CD8-positive, alpha-beta T cell (primary cell): ENCODE measurements at regions of chr15 and their contacts with region 1.

Region 1: GRCh38 chr15:42920519-42921227 is at the start of gene TTBK2:
- DNase-seq: peak; percentile 94 to 99 (median 97)
- ATAC-seq: peak; percentile 94
- H3K4me3 ChIP-seq: peak within 1 kb of the TSS; percentile 69 to 70
- H3K4me3 Mint-ChIP-seq: peak within 1 kb of the TSS; percentile 98
- H3K27ac ChIP-seq: peak within 1 kb of the TSS; percentile 39 to 64
- H3K27ac Mint-ChIP-seq: peak within 1 kb of the TSS; percentile 96
- H3K4me1 ChIP-seq: peaks cover 9% of the 10 kb centered on the region
- H3K4me1 Mint-ChIP-seq: peaks cover 31% of the 10 kb centered on the region
- H3K27me3 ChIP-seq: no peaks in the 10 kb centered on the region
- H3K27me3 Mint-ChIP-seq: no peaks in the 10 kb centered on the region
- CTCF ChIP-seq: no peak
- total RNA-seq, gene TTBK2: 17.7 to 19.3 TPM

Region 2: GRCh38 chr15:40941528-40942336 is 1978.9 kb before region 1 on chr15:
- CTCF ChIA-PET with region 1: no interaction called
- POLR2A ChIA-PET with region 1: no interaction called
- intact Hi-C with region 1: no loop called
- DNase-seq: peak in 8 of 9 experiments; percentile 56 to 84 (median 66)
- ATAC-seq: peak; percentile 72
- H3K4me3 ChIP-seq: peak overlapping the region; percentile 69 to 78
- H3K4me3 Mint-ChIP-seq: peak overlapping the region; percentile 86
- H3K27ac ChIP-seq: peak overlapping the region; percentile 30 to 64
- H3K27ac Mint-ChIP-seq: peak overlapping the region; percentile 30
- H3K4me1 ChIP-seq: peaks cover 29% of the 10 kb centered on the region
- H3K4me1 Mint-ChIP-seq: peaks cover 37% of the 10 kb centered on the region
- H3K27me3 ChIP-seq: no peaks in the 10 kb centered on the region
- H3K27me3 Mint-ChIP-seq: no peaks in the 10 kb centered on the region
- CTCF ChIP-seq: peak; percentile 40

Region 3: GRCh38 chr15:41331833-41332787 is 1588.6 kb before region 1 on chr15 and contains the start of gene OIP5:
- CTCF ChIA-PET with region 1: no interaction called
- POLR2A ChIA-PET with region 1: no interaction called
- intact Hi-C with region 1: loop called in 1 of 2 experiments (anchors 5 kb)
- DNase-seq: peak; percentile 95 to 100 (median 96)
- ATAC-seq: peak; percentile 96
- H3K4me3 ChIP-seq: peak within 1 kb of the TSS; percentile 84 to 94
- H3K4me3 Mint-ChIP-seq: peak within 1 kb of the TSS; percentile 97
- H3K27ac ChIP-seq: peak within 1 kb of the TSS; percentile 46 to 63
- H3K27ac Mint-ChIP-seq: peak within 1 kb of the TSS; percentile 87
- H3K4me1 ChIP-seq: peaks cover 14% of the 10 kb centered on the region
- H3K4me1 Mint-ChIP-seq: peaks cover 30% of the 10 kb centered on the region
- H3K27me3 ChIP-seq: no peaks in the 10 kb centered on the region
- H3K27me3 Mint-ChIP-seq: no peaks in the 10 kb centered on the region
- CTCF ChIP-seq: peak; percentile 58
- total RNA-seq, gene OIP5: not detected

Region 4: GRCh38 chr15:42495361-42496212 is 425.1 kb before region 1 on chr15 and contains the start of gene SNAP23:
- CTCF ChIA-PET with region 1: no interaction called
- POLR2A ChIA-PET with region 1: no interaction called
- intact Hi-C with region 1: loop called (anchors 2 to 5 kb)
- DNase-seq: peak; percentile 49 to 91 (median 84)
- ATAC-seq: peak; percentile 90
- H3K4me3 ChIP-seq: peak within 1 kb of the TSS; percentile 82 to 90
- H3K4me3 Mint-ChIP-seq: peak within 1 kb of the TSS; percentile 97
- H3K27ac ChIP-seq: peak within 1 kb of the TSS; percentile 60 to 71
- H3K27ac Mint-ChIP-seq: peak within 1 kb of the TSS; percentile 97
- H3K4me1 ChIP-seq: peaks cover 41% of the 10 kb centered on the region
- H3K4me1 Mint-ChIP-seq: peaks cover 76% of the 10 kb centered on the region
- H3K27me3 ChIP-seq: no peaks in the 10 kb centered on the region
- H3K27me3 Mint-ChIP-seq: no peaks in the 10 kb centered on the region
- CTCF ChIP-seq: no peak
- total RNA-seq, gene SNAP23: 30.9 to 39.9 TPM

Region 5: DNA sequence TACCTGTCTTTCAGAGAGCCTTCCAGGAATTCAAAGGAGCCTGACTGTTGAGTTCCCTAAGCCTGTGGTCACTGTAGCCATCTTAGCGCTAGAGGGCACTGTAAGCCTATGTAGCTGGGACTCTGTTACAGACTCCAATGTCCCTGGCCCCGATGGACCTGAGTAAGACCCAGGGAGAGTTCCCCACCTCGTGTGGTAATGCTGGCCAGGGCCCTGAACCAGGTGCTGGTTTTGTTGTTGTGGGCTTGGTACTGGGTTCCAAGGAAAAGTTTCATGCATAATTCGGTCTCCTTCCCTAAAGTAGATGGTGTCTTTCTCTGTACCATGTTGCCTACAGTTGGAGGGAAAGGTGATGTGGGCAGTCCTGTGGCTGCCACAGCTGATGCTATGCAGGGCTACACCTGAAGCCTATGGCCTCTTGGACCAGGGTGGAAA is 216.2 kb before region 1 on chr15:
- CTCF ChIA-PET with region 1: interaction called, 47 read pairs
- POLR2A ChIA-PET with region 1: no interaction called
- intact Hi-C with region 1: no loop called
- DNase-seq: peak; percentile 29 to 76 (median 59)
- ATAC-seq: peak; percentile 84
- H3K4me3 ChIP-seq: no peak overlapping the region
- H3K4me3 Mint-ChIP-seq: no peak overlapping the region
- H3K27ac ChIP-seq: no peak overlapping the region
- H3K27ac Mint-ChIP-seq: no peak overlapping the region
- H3K4me1 ChIP-seq: no peaks in the 10 kb centered on the region
- H3K4me1 Mint-ChIP-seq: no peaks in the 10 kb centered on the region
- H3K27me3 ChIP-seq: no peaks in the 10 kb centered on the region
- H3K27me3 Mint-ChIP-seq: no peaks in the 10 kb centered on the region
- CTCF ChIP-seq: peak; percentile 64

Region 6: GRCh38 chr15:42800731-42801474 is 119.8 kb before region 1 on chr15:
- CTCF ChIA-PET with region 1: no interaction called
- POLR2A ChIA-PET with region 1: no interaction called
- intact Hi-C with region 1: loop called in 1 of 2 experiments (anchors 2 kb)
- DNase-seq: peak in 2 of 9 experiments; percentile 7 to 13
- ATAC-seq: no peak
- H3K4me3 ChIP-seq: no peak overlapping the region
- H3K4me3 Mint-ChIP-seq: no peak overlapping the region
- H3K27ac ChIP-seq: no peak overlapping the region
- H3K27ac Mint-ChIP-seq: no peak overlapping the region
- H3K4me1 ChIP-seq: no peaks in the 10 kb centered on the region
- H3K4me1 Mint-ChIP-seq: peaks cover 11% of the 10 kb centered on the region
- H3K27me3 ChIP-seq: no peaks in the 10 kb centered on the region
- H3K27me3 Mint-ChIP-seq: no peaks in the 10 kb centered on the region
- CTCF ChIP-seq: no peak

Region 7: GRCh38 chr15:43185157-43186017 is 264.7 kb after region 1 on chr15 and contains the start of gene CCNDBP1:
- CTCF ChIA-PET with region 1: no interaction called
- POLR2A ChIA-PET with region 1: no interaction called
- intact Hi-C with region 1: loop called in 1 of 2 experiments (anchors 10 kb)
- DNase-seq: peak; percentile 73 to 93 (median 86)
- ATAC-seq: peak; percentile 75
- H3K4me3 ChIP-seq: peak within 1 kb of the TSS; percentile 82 to 97
- H3K4me3 Mint-ChIP-seq: peak within 1 kb of the TSS; percentile 97
- H3K27ac ChIP-seq: peak within 1 kb of the TSS; percentile 87 to 91
- H3K27ac Mint-ChIP-seq: peak within 1 kb of the TSS; percentile 98
- H3K4me1 ChIP-seq: peaks cover 18% of the 10 kb centered on the region
- H3K4me1 Mint-ChIP-seq: peaks cover 43% of the 10 kb centered on the region
- H3K27me3 ChIP-seq: no peaks in the 10 kb centered on the region
- H3K27me3 Mint-ChIP-seq: no peaks in the 10 kb centered on the region
- CTCF ChIP-seq: peak; percentile 56
- total RNA-seq, gene CCNDBP1: 80.3 to 81.1 TPM

Region 8: DNA sequence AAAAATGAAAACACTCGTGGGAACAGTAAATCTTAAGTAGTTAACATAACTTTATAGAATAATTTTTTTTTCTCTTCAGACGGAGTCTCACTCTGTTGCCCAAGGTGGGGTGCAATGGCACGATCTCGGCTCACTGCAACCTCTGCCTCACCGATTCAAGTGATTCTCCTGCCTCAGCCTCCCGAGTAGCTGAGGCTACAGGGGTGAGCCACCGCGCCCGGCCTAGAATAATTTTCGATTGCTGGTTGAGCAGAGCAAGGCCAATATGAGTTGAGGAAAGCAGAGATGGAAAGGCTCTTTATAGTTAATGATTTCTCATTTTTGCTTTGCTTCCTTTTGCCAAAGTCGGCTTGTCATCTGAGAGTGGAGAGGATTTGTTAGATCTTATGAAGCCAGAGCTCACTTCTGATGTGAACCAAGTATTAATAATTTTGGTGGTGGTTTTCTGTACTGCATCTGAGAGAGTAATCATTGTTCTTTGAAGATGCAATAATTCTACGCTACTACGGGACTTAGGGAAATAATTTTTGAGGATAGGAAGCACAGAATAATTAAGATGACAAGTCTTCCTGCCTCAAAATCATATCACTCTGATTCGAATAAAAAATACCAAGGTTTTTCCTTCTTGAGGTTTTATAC is 1366.3 kb after region 1 on chr15:
- CTCF ChIA-PET with region 1: no interaction called
- POLR2A ChIA-PET with region 1: no interaction called
- intact Hi-C with region 1: loop called in 1 of 2 experiments (anchors 5 kb)
- DNase-seq: peak in 2 of 9 experiments; percentile 7 to 36
- ATAC-seq: no peak
- H3K4me3 ChIP-seq: peak overlapping the region; percentile 77 to 91
- H3K4me3 Mint-ChIP-seq: peak overlapping the region; percentile 94
- H3K27ac ChIP-seq: peak overlapping the region; percentile 95 to 97
- H3K27ac Mint-ChIP-seq: peak overlapping the region; percentile 98
- H3K4me1 ChIP-seq: peaks cover 26% of the 10 kb centered on the region
- H3K4me1 Mint-ChIP-seq: peaks cover 42% of the 10 kb centered on the region
- H3K27me3 ChIP-seq: no peaks in the 10 kb centered on the region
- H3K27me3 Mint-ChIP-seq: peaks cover 2% of the 10 kb centered on the region
- CTCF ChIP-seq: peak; percentile 36